ENCODE measurements at regions of chr14 and their contacts with region 1.

Region 1: GRCh38 chr14:53528185-53528671 is 375.1 kb upstream of the DDHD1 start:
- DNase-seq: no peak
- H3K4me3 ChIP-seq: no peak overlapping the region
- H3K27ac ChIP-seq: no peak overlapping the region
- H3K4me1 ChIP-seq: no peaks in the 10 kb centered on the region
- H3K27me3 ChIP-seq: no peaks in the 10 kb centered on the region
- CTCF ChIP-seq: no peak
- POLR2A ChIP-seq: no peak

Region 2: DNA sequence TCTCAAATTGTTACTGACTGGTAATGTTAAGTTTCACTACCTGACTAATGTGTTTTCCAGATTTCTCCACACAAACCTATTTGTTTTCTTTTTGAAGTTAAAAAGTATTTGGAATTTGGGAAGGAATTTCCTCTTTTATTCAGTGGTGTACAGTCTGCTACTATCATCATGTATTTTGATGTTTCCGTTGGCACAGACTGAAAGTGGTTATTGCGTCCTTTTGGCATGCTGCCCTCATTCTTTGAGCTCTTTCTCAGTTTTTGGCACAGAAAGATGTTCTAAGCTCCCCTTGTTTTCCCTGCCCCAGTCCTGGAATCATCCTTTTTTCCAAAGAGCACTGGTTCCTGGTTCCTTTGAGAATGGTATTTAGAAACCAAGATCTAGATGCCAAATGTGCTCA is 1570.3 kb before region 1 on chr14:
- intact Hi-C with region 1: loop called (anchors 10 kb)
- DNase-seq: no peak
- H3K4me3 ChIP-seq: no peak overlapping the region
- H3K27ac ChIP-seq: no peak overlapping the region
- H3K4me1 ChIP-seq: no peaks in the 10 kb centered on the region
- H3K27me3 ChIP-seq: no peaks in the 10 kb centered on the region
- CTCF ChIP-seq: no peak
- POLR2A ChIP-seq: no peak

Region 3: GRCh38 chr14:52609445-52610044 is 918.7 kb before region 1 on chr14:
- intact Hi-C with region 1: no loop called
- DNase-seq: no peak
- H3K4me3 ChIP-seq: no peak overlapping the region
- H3K27ac ChIP-seq: no peak overlapping the region
- H3K4me1 ChIP-seq: no peaks in the 10 kb centered on the region
- H3K27me3 ChIP-seq: no peaks in the 10 kb centered on the region
- CTCF ChIP-seq: no peak
- POLR2A ChIP-seq: no peak